Aorta (tissue), 5 donors: ENCODE measurements at regions of chr12 and their contacts with region 1.

Region 1: GRCh38 chr12:4276524-4277204 is 3.1 kb downstream of the CCND2 start:
- DNase-seq: peak; percentile 89 to 91
- ATAC-seq: peak; percentile 84
- H3K4me3 ChIP-seq: no peak overlapping the region
- H3K27ac ChIP-seq: peak overlapping the region; percentile 14 to 45
- H3K4me1 ChIP-seq: no peaks in the 10 kb centered on the region
- H3K27me3 ChIP-seq: no peaks in the 10 kb centered on the region

Region 2: DNA sequence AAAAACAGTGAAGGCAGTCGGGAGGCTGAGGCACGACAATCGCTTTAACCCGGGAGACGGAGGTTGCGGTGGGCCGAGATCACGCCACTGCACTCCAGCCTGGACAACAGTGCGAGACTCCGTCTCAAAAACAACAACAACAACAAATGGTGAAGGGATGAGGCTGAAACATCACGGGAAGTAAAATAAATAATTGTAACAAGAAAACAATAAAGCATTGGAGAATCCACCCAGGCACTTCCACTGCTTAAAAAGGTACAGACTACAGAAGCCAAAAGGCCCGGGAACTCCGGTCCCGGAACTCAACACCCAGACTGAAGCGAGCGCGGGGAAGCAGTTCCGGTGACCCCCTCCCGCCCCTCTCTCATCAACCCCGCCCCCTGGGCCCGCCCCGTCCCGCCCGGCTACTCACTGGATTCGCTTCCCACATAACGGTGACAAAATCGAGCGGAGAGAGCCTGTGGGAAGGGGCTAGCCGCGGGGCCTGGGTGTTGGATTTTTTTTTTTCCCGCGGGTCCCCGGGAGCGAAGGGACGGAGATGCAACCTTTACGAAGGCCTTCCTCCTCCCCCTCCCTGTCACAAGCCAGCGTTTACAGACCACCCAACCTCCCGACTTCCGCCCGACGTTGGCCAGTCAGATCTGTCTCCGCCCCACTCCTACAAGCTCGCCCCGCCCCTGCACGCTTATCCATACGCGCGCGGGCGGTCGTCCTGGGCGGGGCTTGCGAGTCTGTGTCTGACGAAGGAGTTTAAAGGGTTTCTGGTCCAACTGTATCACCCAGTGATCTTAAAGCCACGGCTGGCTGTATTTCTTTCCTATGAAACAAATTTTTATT is 403.6 kb before region 1 on chr12 and contains the start of gene PARP11:
- intact Hi-C with region 1: loop called in 1 of 2 experiments (anchors 5 kb)
- DNase-seq: peak; percentile 99
- ATAC-seq: peak; percentile 100
- H3K4me3 ChIP-seq: peak within 1 kb of the TSS; percentile 97 to 98
- H3K27ac ChIP-seq: peak within 1 kb of the TSS; percentile 72 to 87
- H3K4me1 ChIP-seq: peaks cover 4 to 7% of the 10 kb centered on the region in 2 donors
- H3K27me3 ChIP-seq: no peaks in the 10 kb centered on the region
- total RNA-seq, gene PARP11: 11.9 to 18.2 TPM

Region 3: GRCh38 chr12:3885277-3886094 is 391.2 kb before region 1 on chr12:
- intact Hi-C with region 1: loop called (anchors 1 to 5 kb)
- DNase-seq: no peak
- ATAC-seq: peak; percentile 83
- H3K4me3 ChIP-seq: peak overlapping the region; percentile 70 to 94
- H3K27ac ChIP-seq: peak overlapping the region; percentile 48 to 93
- H3K4me1 ChIP-seq: no peaks in the 10 kb centered on the region
- H3K27me3 ChIP-seq: no peaks in the 10 kb centered on the region

Region 4: GRCh38 chr12:3996348-3996747 is 280.3 kb before region 1 on chr12:
- intact Hi-C with region 1: loop called (anchors 2 kb)
- DNase-seq: no peak
- ATAC-seq: no peak
- H3K4me3 ChIP-seq: no peak overlapping the region
- H3K27ac ChIP-seq: no peak overlapping the region
- H3K4me1 ChIP-seq: no peaks in the 10 kb centered on the region
- H3K27me3 ChIP-seq: peaks cover 0 to 2% of the 10 kb centered on the region in 2 donors

Region 5: GRCh38 chr12:4030929-4031702 is 245.5 kb before region 1 on chr12:
- intact Hi-C with region 1: loop called (anchors 5 kb)
- DNase-seq: peak; percentile 95 to 96
- ATAC-seq: peak; percentile 97
- H3K4me3 ChIP-seq: peak overlapping the region in 1 of 2 donors; percentile 26
- H3K27ac ChIP-seq: peak overlapping the region; percentile 73 to 77
- H3K4me1 ChIP-seq: no peaks in the 10 kb centered on the region
- H3K27me3 ChIP-seq: no peaks in the 10 kb centered on the region

Region 6: GRCh38 chr12:4107436-4107878 is 169.2 kb before region 1 on chr12:
- intact Hi-C with region 1: loop called in 1 of 2 experiments (anchors 1 kb)
- DNase-seq: no peak
- ATAC-seq: peak; percentile 70
- H3K4me3 ChIP-seq: no peak overlapping the region
- H3K27ac ChIP-seq: no peak overlapping the region
- H3K4me1 ChIP-seq: no peaks in the 10 kb centered on the region
- H3K27me3 ChIP-seq: no peaks in the 10 kb centered on the region